Activated T-helper 1 cell treated with anti-CD3 and anti-CD28 coated beads, Interleukin-12 subunit alpha, Interleukin-12 subunit beta, Interleukin-2, Interleukin-4 antibody, amounts not matched to agents 30 ng/mL and 10 ng/mL and 1 ng/mL, durations not matched to agents 14 hours and 24 hours and 36 hours (primary cell): ENCODE measurements at regions of chr2 and their contacts with region 1.

Region 1: DNA sequence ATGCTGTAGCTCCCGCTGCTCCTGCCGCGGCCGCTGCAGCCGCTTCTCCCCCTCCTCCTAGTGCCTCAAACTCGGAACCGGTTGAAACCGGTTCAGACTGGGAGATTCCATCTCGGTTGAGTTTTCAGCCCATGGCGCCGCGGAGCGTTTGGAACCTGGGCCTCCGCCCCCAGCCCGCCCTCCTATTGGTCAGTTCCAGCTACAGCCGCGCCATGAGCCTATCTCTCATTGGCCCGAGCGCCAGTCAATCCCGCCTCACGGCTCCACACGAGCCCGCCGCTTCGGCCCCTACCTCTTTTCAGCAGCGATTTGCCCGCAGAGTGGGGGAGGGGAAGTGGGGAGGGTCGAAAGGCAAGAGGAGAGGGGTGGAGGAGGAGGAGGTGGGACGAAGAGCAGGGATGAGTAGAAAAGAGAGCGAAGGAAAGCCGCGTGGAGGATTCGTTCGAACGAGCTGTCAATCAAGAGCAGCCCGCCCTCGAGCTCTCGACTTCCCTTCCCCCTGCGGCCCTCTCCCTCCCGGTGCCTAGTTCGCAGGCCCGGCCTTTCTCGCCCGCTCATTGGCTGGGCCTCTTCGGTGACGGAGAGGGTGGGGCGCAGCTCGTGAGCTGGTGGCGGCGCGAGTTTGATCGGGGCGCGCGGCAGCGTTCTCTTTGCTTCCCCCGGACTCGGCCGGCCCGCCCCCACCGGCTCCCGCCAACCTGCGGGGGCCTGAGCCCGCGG is at the start of gene XPO1:
- DNase-seq: peak; percentile 99
- H3K4me3 Mint-ChIP-seq: peak within 1 kb of the TSS; percentile 100
- H3K27ac Mint-ChIP-seq: peak within 1 kb of the TSS; percentile 100
- H3K4me1 Mint-ChIP-seq: peaks cover 35% of the 10 kb centered on the region
- H3K27me3 Mint-ChIP-seq: peaks cover 4% of the 10 kb centered on the region
- total RNA-seq, gene XPO1: 213 and 215 TPM in 2 replicates

Region 2: DNA sequence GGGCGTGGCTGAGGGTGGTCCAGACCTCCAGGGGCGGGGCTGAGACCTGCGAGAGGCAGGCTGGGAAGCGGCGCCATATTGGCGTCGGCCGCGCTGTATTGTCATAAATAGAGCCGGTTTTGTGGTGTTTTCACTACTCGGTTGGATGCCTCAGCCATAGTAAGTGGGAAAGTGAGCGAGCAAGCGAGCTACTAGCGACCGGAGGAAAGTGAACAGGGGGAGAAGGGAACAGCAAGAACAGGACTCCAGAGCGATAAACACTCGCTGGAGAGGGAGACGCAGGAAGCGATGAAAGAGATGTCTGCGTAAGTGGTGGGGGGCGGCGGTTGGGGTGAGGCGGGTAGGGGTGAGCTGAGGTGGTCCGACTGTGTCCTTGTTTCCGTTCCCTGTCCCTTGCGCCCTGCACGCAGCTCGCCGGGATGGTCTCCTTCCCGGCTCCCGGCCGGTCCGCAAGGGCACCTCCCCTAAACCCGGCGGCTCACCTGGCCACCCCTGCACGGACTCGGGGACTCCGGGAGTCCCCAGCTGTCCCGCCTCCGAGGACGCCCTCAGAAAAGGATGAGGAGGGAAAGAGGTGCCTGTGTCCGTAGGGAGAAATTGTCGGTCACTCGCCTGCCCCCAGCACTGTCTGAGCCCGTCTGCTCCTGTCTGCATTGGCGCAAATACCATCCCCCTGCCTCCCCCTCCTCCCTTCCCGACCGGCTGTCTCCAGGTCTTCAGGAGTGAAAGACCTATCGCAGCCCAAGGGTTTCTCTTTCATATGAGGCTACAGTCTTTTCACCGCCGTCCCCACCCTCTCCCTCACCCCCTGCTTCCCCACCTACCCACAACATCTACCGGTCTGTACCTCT is 781.9 kb before region 1 on chr2 and contains the start of gene PAPOLG:
- intact Hi-C with region 1: loop called (anchors 2 kb)
- DNase-seq: peak; percentile 94
- H3K4me3 Mint-ChIP-seq: peak within 1 kb of the TSS; percentile 99
- H3K27ac Mint-ChIP-seq: peak within 1 kb of the TSS; percentile 99
- H3K4me1 Mint-ChIP-seq: peaks cover 31% of the 10 kb centered on the region
- H3K27me3 Mint-ChIP-seq: no peaks in the 10 kb centered on the region
- total RNA-seq, gene PAPOLG: 17.2 and 22.2 TPM in 2 replicates

Region 3: GRCh38 chr2:61016808-61017555 is 521.4 kb before region 1 on chr2:
- intact Hi-C with region 1: loop called (anchors 2 kb)
- DNase-seq: peak; percentile 63
- H3K4me3 Mint-ChIP-seq: peak overlapping the region; percentile 97
- H3K27ac Mint-ChIP-seq: peak overlapping the region; percentile 96
- H3K4me1 Mint-ChIP-seq: peaks cover 37% of the 10 kb centered on the region
- H3K27me3 Mint-ChIP-seq: no peaks in the 10 kb centered on the region

Region 4: GRCh38 chr2:61176755-61177726 is 361.3 kb before region 1 on chr2:
- intact Hi-C with region 1: loop called (anchors 1 kb)
- DNase-seq: peak; percentile 92
- H3K4me3 Mint-ChIP-seq: peak overlapping the region; percentile 90
- H3K27ac Mint-ChIP-seq: peak overlapping the region; percentile 87
- H3K4me1 Mint-ChIP-seq: peaks cover 48% of the 10 kb centered on the region
- H3K27me3 Mint-ChIP-seq: peaks cover 10% of the 10 kb centered on the region

Region 5: GRCh38 chr2:61670591-61671501 is 132.5 kb after region 1 on chr2:
- intact Hi-C with region 1: loop called (anchors 1 kb)
- DNase-seq: peak; percentile 22
- H3K4me3 Mint-ChIP-seq: peak overlapping the region; percentile 73
- H3K27ac Mint-ChIP-seq: peak overlapping the region; percentile 85
- H3K4me1 Mint-ChIP-seq: peaks cover 19% of the 10 kb centered on the region
- H3K27me3 Mint-ChIP-seq: peaks cover 7% of the 10 kb centered on the region

Region 6: GRCh38 chr2:61854474-61855182 is 316.3 kb after region 1 on chr2:
- intact Hi-C with region 1: loop called (anchors 1 kb)
- DNase-seq: peak; percentile 87
- H3K4me3 Mint-ChIP-seq: peak overlapping the region; percentile 98
- H3K27ac Mint-ChIP-seq: peak overlapping the region; percentile 88
- H3K4me1 Mint-ChIP-seq: peaks cover 23% of the 10 kb centered on the region
- H3K27me3 Mint-ChIP-seq: no peaks in the 10 kb centered on the region

Region 7: DNA sequence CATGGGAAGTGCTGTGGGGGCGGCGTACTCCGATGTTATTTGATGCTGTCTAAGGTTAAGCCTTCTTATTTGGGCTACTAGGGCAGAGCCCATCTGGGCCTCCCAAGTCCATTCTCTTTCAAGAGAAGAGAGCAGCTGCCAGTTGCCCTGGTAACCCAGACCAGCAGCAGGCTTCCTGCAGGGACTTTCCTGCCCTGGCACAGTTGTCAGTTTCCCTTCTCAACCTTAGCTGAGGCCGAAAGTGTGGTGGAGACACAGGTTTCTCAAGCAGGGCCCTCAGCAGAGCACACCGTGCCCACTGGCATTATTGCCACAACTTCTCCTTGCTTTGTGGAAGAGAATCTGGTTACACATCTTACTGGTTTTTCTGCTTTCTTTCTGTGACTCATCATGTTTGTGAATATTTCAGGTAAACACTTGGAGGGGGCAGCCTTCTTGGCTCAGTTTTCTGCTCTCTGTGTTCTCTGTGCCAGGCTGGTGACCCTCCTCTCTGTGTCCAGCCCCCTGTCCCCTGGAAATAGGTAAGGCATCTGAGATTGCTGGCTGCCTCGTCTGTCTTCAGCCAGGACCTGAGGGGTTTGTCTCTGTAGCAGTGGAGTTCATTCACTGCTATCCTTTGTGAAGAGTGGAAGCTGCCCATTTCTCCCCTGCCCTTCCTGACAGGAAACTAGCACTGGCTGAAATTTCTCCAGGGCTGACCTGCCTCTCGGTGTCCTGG is 768.5 kb after region 1 on chr2:
- intact Hi-C with region 1: loop called (anchors 5 kb)
- DNase-seq: peak; percentile 36
- H3K4me3 Mint-ChIP-seq: peak overlapping the region; percentile 54
- H3K27ac Mint-ChIP-seq: peak overlapping the region; percentile 91
- H3K4me1 Mint-ChIP-seq: peaks cover 81% of the 10 kb centered on the region
- H3K27me3 Mint-ChIP-seq: peaks cover 8% of the 10 kb centered on the region